Activated CD4-positive, alpha-beta T cell treated with anti-CD3 and anti-CD28 coated beads, Interleukin-2, amount 10 ng/mL, durations not matched to agents 24 days and 14 days (primary cell): ENCODE measurements at regions of chr10 and their contacts with region 1.

Region 1: GRCh38 chr10:62019013-62019684 is 117.7 kb downstream of the ARID5B start:
- DNase-seq: no peak
- H3K4me3 Mint-ChIP-seq: peak overlapping the region; percentile 41
- H3K27ac Mint-ChIP-seq: peak overlapping the region; percentile 93
- H3K4me1 Mint-ChIP-seq: peaks cover 53% of the 10 kb centered on the region
- H3K27me3 Mint-ChIP-seq: no peaks in the 10 kb centered on the region

Region 2: DNA sequence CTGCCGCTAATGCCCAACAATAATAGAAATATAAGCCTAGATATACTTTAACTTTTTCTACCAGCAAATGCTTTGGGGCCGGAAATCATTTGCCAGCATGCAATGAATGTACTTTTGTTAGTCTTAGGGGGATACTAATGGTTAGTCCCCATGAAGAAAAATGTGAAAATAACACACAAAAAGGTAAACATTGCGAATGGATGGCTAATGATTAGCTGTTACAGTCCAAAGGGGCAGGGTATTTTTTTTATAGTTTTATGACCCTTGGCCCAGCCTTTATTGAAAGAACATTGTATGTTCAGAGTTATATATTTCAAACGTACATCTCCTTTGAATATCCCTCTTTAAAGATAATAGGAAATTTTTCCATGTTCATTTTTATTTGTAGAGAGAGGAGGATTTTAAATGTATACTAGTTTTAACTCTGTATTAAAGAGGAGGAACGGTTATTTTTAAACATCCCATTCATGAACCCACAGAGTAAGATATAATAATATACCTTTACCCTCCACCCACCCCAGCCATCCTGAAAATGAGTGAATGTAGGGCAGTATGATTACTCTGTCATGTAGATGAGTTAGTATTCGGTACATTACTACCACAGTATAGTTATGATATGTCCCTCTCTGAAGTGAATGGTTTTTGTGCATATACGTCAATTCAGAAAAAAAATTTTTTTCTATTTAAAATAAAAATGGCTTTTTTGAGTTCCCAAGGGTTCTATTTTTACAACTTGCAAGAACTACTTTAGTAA is 54.0 kb before region 1 on chr10:
- intact Hi-C with region 1: loop called (anchors 1 kb)
- DNase-seq: no peak
- H3K4me3 Mint-ChIP-seq: no peak overlapping the region
- H3K27ac Mint-ChIP-seq: peak overlapping the region; percentile 48
- H3K4me1 Mint-ChIP-seq: peaks cover 75% of the 10 kb centered on the region
- H3K27me3 Mint-ChIP-seq: no peaks in the 10 kb centered on the region

Region 3: GRCh38 chr10:61975391-61975932 is 43.7 kb before region 1 on chr10:
- intact Hi-C with region 1: no loop called
- DNase-seq: no peak
- H3K4me3 Mint-ChIP-seq: no peak overlapping the region
- H3K27ac Mint-ChIP-seq: no peak overlapping the region
- H3K4me1 Mint-ChIP-seq: peaks cover 34% of the 10 kb centered on the region
- H3K27me3 Mint-ChIP-seq: no peaks in the 10 kb centered on the region

Region 4: GRCh38 chr10:61992671-61993668 is 26.2 kb before region 1 on chr10:
- intact Hi-C with region 1: loop called (anchors 1 kb)
- DNase-seq: peak; percentile 91
- H3K4me3 Mint-ChIP-seq: peak overlapping the region; percentile 77
- H3K27ac Mint-ChIP-seq: peak overlapping the region; percentile 93
- H3K4me1 Mint-ChIP-seq: peaks cover 65% of the 10 kb centered on the region
- H3K27me3 Mint-ChIP-seq: no peaks in the 10 kb centered on the region

Region 5: DNA sequence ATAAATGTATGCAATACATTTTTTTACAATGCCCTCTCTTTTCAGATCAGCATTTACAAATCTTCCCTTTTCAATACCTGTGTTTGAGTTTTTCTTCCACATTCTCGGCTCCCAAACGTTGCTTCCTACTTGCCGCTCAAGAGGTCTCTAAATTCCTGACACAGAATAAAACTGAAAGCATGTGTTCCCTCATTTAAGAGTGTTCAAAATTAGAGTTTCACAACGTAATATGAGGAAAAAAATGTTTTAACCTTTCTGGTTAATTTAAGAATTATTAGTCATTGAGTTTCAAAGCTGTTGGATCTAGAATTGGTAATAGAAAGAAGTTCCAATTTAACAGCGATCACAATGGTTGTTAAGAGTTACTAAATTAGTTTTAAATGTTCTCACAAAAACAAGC is 17.3 kb before region 1 on chr10:
- intact Hi-C with region 1: loop called (anchors 1 kb)
- DNase-seq: no peak
- H3K4me3 Mint-ChIP-seq: peak overlapping the region; percentile 62
- H3K27ac Mint-ChIP-seq: peak overlapping the region; percentile 85
- H3K4me1 Mint-ChIP-seq: peaks cover 60% of the 10 kb centered on the region
- H3K27me3 Mint-ChIP-seq: no peaks in the 10 kb centered on the region

Region 6: GRCh38 chr10:62038609-62039190 is 19.6 kb after region 1 on chr10:
- intact Hi-C with region 1: loop called (anchors 2 kb)
- DNase-seq: peak; percentile 94
- H3K4me3 Mint-ChIP-seq: peak overlapping the region; percentile 67
- H3K27ac Mint-ChIP-seq: peak overlapping the region; percentile 76
- H3K4me1 Mint-ChIP-seq: peaks cover 73% of the 10 kb centered on the region
- H3K27me3 Mint-ChIP-seq: no peaks in the 10 kb centered on the region

Region 7: GRCh38 chr10:62063795-62064472 is 44.8 kb after region 1 on chr10:
- intact Hi-C with region 1: no loop called
- DNase-seq: peak; percentile 73
- H3K4me3 Mint-ChIP-seq: peak overlapping the region; percentile 69
- H3K27ac Mint-ChIP-seq: peak overlapping the region; percentile 84
- H3K4me1 Mint-ChIP-seq: peaks cover 69% of the 10 kb centered on the region
- H3K27me3 Mint-ChIP-seq: no peaks in the 10 kb centered on the region